HEK293T (cell line): ENCODE measurements at regions of chr12 and their contacts with region 1.

Region 1: DNA sequence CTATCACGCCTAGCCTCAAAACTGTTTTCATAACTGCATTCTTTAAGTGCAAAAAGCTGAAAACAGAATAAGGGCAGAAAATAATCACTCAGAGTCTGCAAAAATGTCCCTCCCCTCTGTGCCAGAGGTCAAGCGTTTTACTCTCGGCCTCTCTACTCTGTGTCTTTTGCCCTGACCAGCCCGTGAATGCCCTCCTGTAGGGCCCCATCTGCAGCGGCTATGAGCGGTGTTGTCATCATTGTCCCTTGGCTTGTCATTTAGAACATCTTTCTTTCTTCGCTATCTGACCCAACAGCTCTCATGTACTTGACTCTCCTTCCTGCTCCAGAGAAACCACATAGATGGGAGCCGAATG is 21.7 kb downstream of the ELK3 start:
- DNase-seq: no peak

Region 2: GRCh38 chr12:96061864-96062453 is 153.9 kb before region 1 on chr12:
- CTCF ChIA-PET with region 1: interaction called, 15 read pairs
- POLR2A ChIA-PET with region 1: no interaction called
- DNase-seq: peak; percentile 69

Region 3: DNA sequence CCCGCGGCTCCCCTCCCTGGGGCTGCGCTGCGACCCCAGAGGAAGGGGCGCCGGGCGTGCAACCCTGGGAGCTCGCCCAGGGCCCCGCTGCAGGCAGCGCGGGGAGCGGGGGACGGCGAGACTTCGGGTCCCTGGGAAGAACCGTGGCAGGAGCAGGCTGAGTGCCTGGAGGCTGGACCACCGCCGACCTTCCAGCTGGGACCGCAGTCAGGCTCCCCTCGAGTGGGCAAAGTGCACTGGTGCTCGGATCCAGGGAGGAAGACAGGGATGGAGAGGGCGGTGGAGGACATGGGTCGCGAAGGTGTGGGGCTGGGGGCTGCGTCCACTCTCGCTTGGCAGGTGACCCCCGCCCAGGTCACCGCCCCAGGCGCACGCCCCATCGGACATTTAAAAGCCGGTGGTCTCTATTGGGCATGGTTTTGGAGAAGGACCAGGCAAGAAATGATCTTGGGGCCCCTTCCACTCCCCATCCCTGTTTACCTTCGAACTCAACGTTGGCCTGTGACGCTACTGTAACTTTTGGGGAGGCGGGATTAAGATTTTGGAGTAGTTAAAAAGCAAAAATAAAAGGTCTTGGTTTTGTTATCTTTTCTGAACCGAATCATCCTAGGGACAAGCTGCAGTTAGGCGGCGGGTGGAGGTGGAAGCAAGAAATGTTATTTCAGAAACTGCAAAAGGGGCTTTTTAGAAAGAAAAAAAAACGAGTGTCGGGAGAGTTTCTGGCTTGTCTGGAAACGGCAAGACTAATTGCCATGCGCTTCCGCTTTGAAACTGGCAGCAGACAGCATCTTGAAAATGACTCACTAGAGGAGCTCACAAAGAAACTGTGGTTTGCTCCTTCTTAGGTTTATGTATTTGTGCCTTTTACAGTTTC is 20.7 kb before region 1 on chr12:
- CTCF ChIA-PET with region 1: interaction called, 10 read pairs
- POLR2A ChIA-PET with region 1: no interaction called
- DNase-seq: peak; percentile 42

Region 4: GRCh38 chr12:96516472-96517430 is 300.9 kb after region 1 on chr12:
- CTCF ChIA-PET with region 1: interaction called, 17 read pairs
- POLR2A ChIA-PET with region 1: no interaction called
- DNase-seq: peak; percentile 55